Endothelial cell of umbilical vein (primary cell): ENCODE measurements at regions of chr3 and their contacts with region 1.

Region 1: DNA sequence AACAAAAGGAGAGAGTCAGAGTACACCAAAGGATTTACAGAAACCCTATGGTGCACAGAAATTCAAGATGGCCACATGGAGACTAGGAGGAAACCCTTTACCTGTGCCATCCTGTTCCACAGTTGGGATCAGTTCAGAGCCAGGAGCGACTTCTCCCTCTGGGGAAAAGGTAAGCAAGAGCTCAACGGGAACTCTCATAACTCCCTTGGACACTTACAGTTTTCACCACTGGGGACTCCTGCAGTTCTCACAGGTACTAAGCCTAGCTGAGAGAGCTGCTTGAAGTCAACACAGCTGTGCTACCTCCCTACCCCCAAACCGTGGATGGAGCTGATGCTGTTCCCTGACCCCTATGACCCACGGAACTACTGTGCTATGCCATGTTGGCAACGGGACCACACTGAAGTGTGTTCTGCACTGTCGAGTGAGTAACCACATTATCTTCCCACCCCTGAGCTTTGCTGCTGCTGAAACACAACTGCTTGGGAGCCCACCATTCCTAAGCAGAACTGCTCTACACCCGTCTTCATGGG is 606.8 kb downstream of the GBE1 start:
- DNase-seq: no peak
- H3K4me3 ChIP-seq: no peak overlapping the region
- H3K27ac ChIP-seq: no peak overlapping the region
- H3K4me1 ChIP-seq: peaks cover 6% of the 10 kb centered on the region
- H3K27me3 ChIP-seq: no peaks in the 10 kb centered on the region
- CTCF ChIP-seq: no peak
- POLR2A ChIP-seq: no peak

Region 2: GRCh38 chr3:81105789-81106488 is 48.7 kb before region 1 on chr3:
- CTCF ChIA-PET with region 1: no interaction called
- POLR2A ChIA-PET with region 1: no interaction called
- dilution Hi-C with region 1: no loop called
- intact Hi-C with region 1: loop called (anchors 1 kb)
- DNase-seq: peak; percentile 94
- H3K4me3 ChIP-seq: no peak overlapping the region
- H3K27ac ChIP-seq: peak overlapping the region; percentile 93
- H3K4me1 ChIP-seq: peaks cover 20% of the 10 kb centered on the region
- H3K27me3 ChIP-seq: no peaks in the 10 kb centered on the region
- CTCF ChIP-seq: no peak
- POLR2A ChIP-seq: no peak

Region 3: DNA sequence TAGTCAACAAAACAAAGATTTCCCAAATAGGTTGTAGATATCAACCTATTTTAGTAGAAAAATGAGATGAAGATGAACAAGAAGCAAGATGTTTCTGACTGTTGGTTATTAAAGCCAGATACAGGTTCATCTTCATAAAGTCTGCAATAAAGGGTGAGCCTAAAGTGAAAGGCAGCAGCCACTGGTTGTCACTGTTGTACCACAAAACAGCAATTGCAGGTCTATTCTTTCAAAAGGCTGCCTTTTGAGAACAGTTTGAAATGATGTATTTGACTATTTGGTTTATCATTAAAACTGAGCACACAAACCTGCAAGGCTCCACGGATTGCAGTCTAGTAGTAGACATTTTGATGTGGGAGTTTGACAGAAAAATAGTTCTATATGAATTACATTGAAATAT is 63.3 kb after region 1 on chr3:
- CTCF ChIA-PET with region 1: interaction called, 3 read pairs
- POLR2A ChIA-PET with region 1: no interaction called
- dilution Hi-C with region 1: no loop called
- intact Hi-C with region 1: loop called (anchors 5 kb)
- DNase-seq: peak; percentile 41
- H3K4me3 ChIP-seq: no peak overlapping the region
- H3K27ac ChIP-seq: no peak overlapping the region
- H3K4me1 ChIP-seq: peaks cover 11% of the 10 kb centered on the region
- H3K27me3 ChIP-seq: no peaks in the 10 kb centered on the region
- CTCF ChIP-seq: peak in 1 of 2 donors; percentile 26
- POLR2A ChIP-seq: no peak